AG04449 (cell line): ENCODE measurements at regions of chr3 and their contacts with region 1.

Region 1: DNA sequence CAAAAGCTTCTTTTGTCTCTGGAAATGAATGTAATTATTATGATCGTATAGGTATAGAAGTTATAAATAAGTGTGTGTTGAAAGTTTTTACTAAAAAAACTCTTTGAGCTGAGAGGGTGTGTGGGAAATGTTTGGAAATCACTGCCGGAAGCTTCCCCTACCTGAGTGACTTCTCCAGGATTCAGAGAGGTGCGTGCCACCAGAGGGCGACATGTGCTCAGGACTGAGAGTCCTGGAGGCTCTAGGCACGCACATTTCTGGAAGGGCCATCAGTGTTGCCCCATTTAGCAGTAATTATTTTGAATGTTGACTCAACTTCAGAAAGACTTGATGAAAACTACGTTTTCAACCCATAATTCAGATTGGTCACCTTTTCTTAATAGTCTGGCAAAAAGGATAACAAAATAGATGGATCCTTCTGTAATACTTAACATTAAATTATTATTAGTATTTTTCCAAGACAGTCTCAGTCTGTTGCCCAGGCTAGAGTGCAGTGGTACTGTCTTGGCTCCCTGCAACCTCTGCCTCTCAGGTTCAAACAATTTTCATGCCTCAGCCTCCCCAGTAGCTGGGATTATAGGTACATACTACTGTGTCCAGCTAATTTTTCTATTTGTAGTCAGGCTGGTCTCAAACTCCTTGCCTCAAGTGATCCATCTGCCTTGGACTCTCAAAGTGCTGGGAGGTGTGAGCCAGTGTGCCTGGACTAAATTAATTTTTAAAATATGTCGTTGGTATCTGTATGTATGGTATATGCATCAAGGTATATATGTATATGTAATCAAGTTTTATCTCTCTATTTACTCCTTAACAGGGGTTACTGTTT is 34.5 kb downstream of the GPR171 start:
- DNase-seq: no peak
- H3K4me3 ChIP-seq: no peak overlapping the region
- CTCF ChIP-seq: peak; percentile 86

Region 2: GRCh38 chr3:150094150-150094925 is 1074.1 kb before region 1 on chr3:
- CTCF ChIA-PET with region 1: no interaction called
- POLR2A ChIA-PET with region 1: no interaction called
- DNase-seq: no peak
- H3K4me3 ChIP-seq: no peak overlapping the region
- CTCF ChIP-seq: no peak

Region 3: GRCh38 chr3:151156618-151157216 is 11.8 kb before region 1 on chr3:
- CTCF ChIA-PET with region 1: interaction called, 11 read pairs
- POLR2A ChIA-PET with region 1: no interaction called
- DNase-seq: no peak
- H3K4me3 ChIP-seq: no peak overlapping the region
- CTCF ChIP-seq: peak; percentile 55

Region 4: GRCh38 chr3:151203051-151203420 is 34.6 kb after region 1 on chr3 and contains the start of gene GPR171:
- CTCF ChIA-PET with region 1: interaction called, 12 read pairs
- POLR2A ChIA-PET with region 1: no interaction called
- DNase-seq: no peak
- H3K4me3 ChIP-seq: no peak within 1 kb of the TSS
- CTCF ChIP-seq: no peak

Region 5: GRCh38 chr3:151265866-151266265 is 97.4 kb after region 1 on chr3:
- CTCF ChIA-PET with region 1: interaction called, 12 read pairs
- POLR2A ChIA-PET with region 1: no interaction called
- DNase-seq: no peak
- H3K4me3 ChIP-seq: no peak overlapping the region
- CTCF ChIP-seq: no peak

Region 6: DNA sequence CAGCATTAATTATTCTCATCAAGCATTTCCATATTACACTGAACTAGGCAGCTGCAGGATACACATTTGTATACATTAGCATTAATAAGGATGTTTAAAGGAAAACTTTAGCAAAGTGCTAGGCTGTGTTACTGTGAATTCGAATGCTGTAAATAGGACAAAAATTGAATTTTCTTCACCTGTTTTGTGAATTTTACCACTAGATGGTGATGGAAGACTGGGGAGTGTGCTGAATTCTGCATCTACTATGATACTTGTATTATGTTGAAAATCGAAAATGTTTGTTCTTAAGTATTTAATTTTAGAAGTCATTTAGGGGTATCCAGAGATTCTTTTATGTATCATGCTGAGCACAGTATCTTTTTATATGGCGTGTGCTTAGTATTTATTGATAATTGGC is 122.2 kb after region 1 on chr3:
- CTCF ChIA-PET with region 1: interaction called, 90 read pairs
- POLR2A ChIA-PET with region 1: no interaction called
- DNase-seq: no peak
- H3K4me3 ChIP-seq: no peak overlapping the region
- CTCF ChIP-seq: peak; percentile 28